CD8-positive, alpha-beta T cell (primary cell): ENCODE measurements at regions of chr2 and their contacts with region 1.

Region 1: GRCh38 chr2:42169100-42169873 is at the start of gene EML4:
- DNase-seq: peak; percentile 81 to 97 (median 90)
- ATAC-seq: peak; percentile 88
- H3K4me3 ChIP-seq: peak within 1 kb of the TSS; percentile 72 to 86
- H3K4me3 Mint-ChIP-seq: no peak within 1 kb of the TSS
- H3K27ac ChIP-seq: peak within 1 kb of the TSS; percentile 77 to 92
- H3K27ac Mint-ChIP-seq: no peak within 1 kb of the TSS
- H3K4me1 ChIP-seq: peaks cover 45% of the 10 kb centered on the region
- H3K4me1 Mint-ChIP-seq: peaks cover 26% of the 10 kb centered on the region
- H3K27me3 ChIP-seq: no peaks in the 10 kb centered on the region
- H3K27me3 Mint-ChIP-seq: no peaks in the 10 kb centered on the region
- CTCF ChIP-seq: no peak
- total RNA-seq, gene EML4: 224 to 240 TPM

Region 2: DNA sequence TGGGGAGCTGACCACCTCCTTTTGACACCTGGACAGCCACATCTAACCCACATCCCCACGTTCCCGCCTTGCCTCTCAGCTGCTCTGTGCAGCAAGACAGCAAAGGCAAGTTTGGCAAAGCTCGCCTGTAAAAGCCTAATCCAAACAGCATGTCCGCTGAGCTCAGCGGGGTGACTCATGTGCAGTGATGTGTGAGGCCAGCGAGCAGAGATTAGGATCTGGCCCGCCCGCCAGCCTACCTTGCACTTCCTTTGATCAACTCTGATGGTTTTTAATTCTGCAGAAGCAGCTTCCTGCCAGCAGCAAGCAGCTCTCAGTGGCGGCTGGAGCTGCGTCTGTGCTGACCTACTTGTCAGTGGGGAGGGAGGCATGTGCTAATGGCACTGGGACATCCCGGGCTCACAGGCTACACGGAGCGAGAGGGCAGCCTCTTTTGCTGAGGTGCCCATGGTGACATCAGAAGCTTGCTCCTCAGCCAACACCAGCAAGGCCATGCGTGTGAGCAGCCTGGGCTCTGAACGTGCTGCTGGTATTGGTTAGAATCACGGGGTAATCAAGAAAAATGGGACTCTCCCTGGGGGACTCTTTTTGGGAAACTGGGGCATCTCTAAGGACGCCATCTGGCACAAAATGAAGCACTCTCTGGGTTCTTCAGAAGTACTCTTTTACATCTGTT is 36.2 kb before region 1 on chr2:
- CTCF ChIA-PET with region 1: interaction called, 8 read pairs
- POLR2A ChIA-PET with region 1: interaction called, 10 read pairs
- intact Hi-C with region 1: loop called (anchors 1 kb)
- DNase-seq: peak; percentile 83 to 97 (median 90)
- ATAC-seq: peak; percentile 88
- H3K4me3 ChIP-seq: peak overlapping the region; percentile 6 to 22
- H3K4me3 Mint-ChIP-seq: peak overlapping the region; percentile 76
- H3K27ac ChIP-seq: peak overlapping the region; percentile 61 to 90
- H3K27ac Mint-ChIP-seq: peak overlapping the region; percentile 98
- H3K4me1 ChIP-seq: peaks cover 80% of the 10 kb centered on the region
- H3K4me1 Mint-ChIP-seq: peaks cover 85% of the 10 kb centered on the region
- H3K27me3 ChIP-seq: no peaks in the 10 kb centered on the region
- H3K27me3 Mint-ChIP-seq: no peaks in the 10 kb centered on the region
- CTCF ChIP-seq: no peak

Region 3: GRCh38 chr2:42182654-42183267 is 13.5 kb after region 1 on chr2:
- CTCF ChIA-PET with region 1: interaction called, 3 read pairs
- POLR2A ChIA-PET with region 1: interaction called, 6 read pairs
- intact Hi-C with region 1: loop called in 1 of 2 experiments (anchors 1 kb)
- DNase-seq: no peak
- ATAC-seq: no peak
- H3K4me3 ChIP-seq: no peak overlapping the region
- H3K4me3 Mint-ChIP-seq: no peak overlapping the region
- H3K27ac ChIP-seq: no peak overlapping the region
- H3K27ac Mint-ChIP-seq: no peak overlapping the region
- H3K4me1 ChIP-seq: peaks cover 66% of the 10 kb centered on the region
- H3K4me1 Mint-ChIP-seq: peaks cover 85% of the 10 kb centered on the region
- H3K27me3 ChIP-seq: no peaks in the 10 kb centered on the region
- H3K27me3 Mint-ChIP-seq: no peaks in the 10 kb centered on the region
- CTCF ChIP-seq: no peak

Region 4: DNA sequence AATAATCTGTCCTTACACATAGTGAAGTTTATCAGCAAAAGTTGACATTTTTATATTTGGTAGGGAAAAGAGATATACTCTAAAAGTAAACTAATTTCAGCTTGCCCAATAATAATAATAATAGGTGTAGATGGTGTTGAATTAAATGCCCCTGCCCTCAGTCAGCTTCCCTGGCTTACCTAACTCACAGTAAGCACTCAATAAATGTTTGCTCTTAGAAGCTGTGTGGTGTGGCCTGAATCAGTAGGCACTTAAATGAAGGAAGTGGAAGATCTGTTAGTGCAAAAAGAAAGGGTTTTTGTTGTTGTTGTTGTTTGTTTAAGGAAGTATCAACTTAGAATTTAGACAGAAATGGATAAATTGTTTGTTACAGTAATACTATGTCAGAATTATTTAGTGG is 36.0 kb after region 1 on chr2:
- CTCF ChIA-PET with region 1: no interaction called
- POLR2A ChIA-PET with region 1: no interaction called
- intact Hi-C with region 1: no loop called
- DNase-seq: no peak
- ATAC-seq: no peak
- H3K4me3 ChIP-seq: no peak overlapping the region
- H3K4me3 Mint-ChIP-seq: no peak overlapping the region
- H3K27ac ChIP-seq: no peak overlapping the region
- H3K27ac Mint-ChIP-seq: no peak overlapping the region
- H3K4me1 ChIP-seq: peaks cover 19% of the 10 kb centered on the region
- H3K4me1 Mint-ChIP-seq: peaks cover 69% of the 10 kb centered on the region
- H3K27me3 ChIP-seq: no peaks in the 10 kb centered on the region
- H3K27me3 Mint-ChIP-seq: no peaks in the 10 kb centered on the region
- CTCF ChIP-seq: no peak